OCI-LY7 (cell line): ENCODE measurements at regions of chr6 and their contacts with region 1.

Region 1: GRCh38 chr6:42043787-42044475 is 6.4 kb upstream of the TAF8 start:
- DNase-seq: peak; percentile 90
- H3K4me3 ChIP-seq: peak overlapping the region; percentile 20
- H3K27ac ChIP-seq: peak overlapping the region; percentile 68
- H3K4me1 ChIP-seq: peaks cover 83% of the 10 kb centered on the region
- CTCF ChIP-seq: peak; percentile 97

Region 2: GRCh38 chr6:41735427-41736356 is 308.2 kb before region 1 on chr6 and contains the start of gene TFEB:
- CTCF ChIA-PET with region 1: no interaction called
- POLR2A ChIA-PET with region 1: interaction called, 3 read pairs
- intact Hi-C with region 1: loop called (anchors 2 kb)
- DNase-seq: peak; percentile 93
- H3K4me3 ChIP-seq: peak within 1 kb of the TSS; percentile 91
- H3K27ac ChIP-seq: peak within 1 kb of the TSS; percentile 94
- H3K4me1 ChIP-seq: peaks cover 41% of the 10 kb centered on the region
- CTCF ChIP-seq: peak; percentile 76
- total RNA-seq, gene TFEB: 25.3 and 36.8 TPM in 2 replicates

Region 3: DNA sequence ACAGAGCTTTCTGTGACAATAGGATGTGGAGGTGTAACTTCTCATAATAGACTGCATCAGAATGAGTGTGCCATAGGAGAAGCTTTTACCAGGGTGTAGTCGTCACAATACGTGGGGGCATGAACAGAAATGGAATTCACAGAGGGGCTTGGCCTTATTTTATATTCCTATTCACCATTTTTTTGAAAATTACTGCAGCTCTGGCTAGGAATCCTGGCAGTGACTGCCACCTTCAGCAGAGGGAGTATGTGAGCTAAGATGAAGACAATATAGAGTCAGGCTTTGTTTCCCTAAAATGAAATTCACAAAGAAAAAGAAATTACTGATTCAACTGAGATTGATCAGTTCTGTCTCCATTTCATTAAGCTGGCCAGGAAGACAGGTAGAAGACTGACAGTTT is 242.6 kb before region 1 on chr6:
- CTCF ChIA-PET with region 1: interaction called, 3 read pairs
- POLR2A ChIA-PET with region 1: interaction called, 3 read pairs
- intact Hi-C with region 1: loop called (anchors 1 kb)
- DNase-seq: peak; percentile 35
- H3K4me3 ChIP-seq: no peak overlapping the region
- H3K27ac ChIP-seq: no peak overlapping the region
- H3K4me1 ChIP-seq: no peaks in the 10 kb centered on the region
- CTCF ChIP-seq: peak; percentile 80

Region 4: GRCh38 chr6:41920921-41921711 is 122.8 kb before region 1 on chr6 and contains the starts of genes BYSL and MED20:
- CTCF ChIA-PET with region 1: interaction called, 10 read pairs
- POLR2A ChIA-PET with region 1: interaction called, 15 read pairs
- intact Hi-C with region 1: loop called (anchors 1 kb)
- DNase-seq: peak; percentile 96
- H3K4me3 ChIP-seq: peak within 1 kb of the TSS; percentile 92
- H3K27ac ChIP-seq: peak within 1 kb of the TSS; percentile 74
- H3K4me1 ChIP-seq: peaks cover 25% of the 10 kb centered on the region
- CTCF ChIP-seq: peak; percentile 97
- total RNA-seq, gene BYSL: 36.1 and 41.9 TPM in 2 replicates
- total RNA-seq, gene MED20: 27.7 and 30.7 TPM in 2 replicates

Region 5: DNA sequence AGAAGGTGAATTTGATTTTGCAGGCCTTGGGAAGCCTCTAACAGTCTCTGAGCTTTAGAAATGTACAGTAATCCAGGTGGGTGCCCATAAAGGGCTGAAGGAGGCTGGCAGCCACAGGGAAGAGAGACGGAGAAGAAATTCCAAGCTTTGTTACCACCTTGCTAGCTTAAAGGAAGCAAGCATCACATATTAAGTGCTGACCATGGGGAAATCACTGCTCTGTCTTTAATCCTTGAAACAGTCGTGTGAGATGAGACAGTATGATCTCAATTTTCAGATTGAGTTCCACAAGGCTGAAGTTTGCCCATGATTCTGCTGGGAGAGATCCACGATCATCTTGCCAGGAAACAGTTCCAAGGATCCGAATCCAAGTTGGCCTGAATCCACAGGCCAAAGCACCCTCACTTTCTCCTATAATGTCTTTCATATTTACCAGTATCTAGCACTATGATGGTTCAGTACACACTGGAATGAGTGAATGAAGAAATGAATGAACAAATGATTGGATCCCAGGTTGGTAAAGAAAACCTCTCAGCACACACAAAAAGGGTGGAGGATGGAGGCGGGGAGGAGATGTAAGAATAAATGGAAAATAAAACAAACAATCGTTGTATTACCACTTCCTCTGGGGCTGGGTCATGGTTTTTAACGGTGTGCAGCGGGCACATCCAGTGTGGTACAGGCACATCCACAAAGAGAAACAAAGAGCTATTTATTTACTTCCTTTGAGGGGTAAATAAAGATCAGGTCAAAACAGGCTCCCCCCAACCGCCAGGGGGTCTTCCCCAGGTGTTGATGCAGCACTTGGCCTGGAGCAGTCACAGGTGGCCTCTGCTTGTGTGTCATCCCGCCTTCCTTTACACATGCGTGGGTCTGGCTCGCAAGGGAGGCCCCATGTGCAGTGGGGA is 21.8 kb before region 1 on chr6:
- CTCF ChIA-PET with region 1: interaction called, 7 read pairs
- POLR2A ChIA-PET with region 1: interaction called, 29 read pairs
- intact Hi-C with region 1: loop called (anchors 1 kb)
- DNase-seq: peak; percentile 98
- H3K4me3 ChIP-seq: peak overlapping the region; percentile 35
- H3K27ac ChIP-seq: peak overlapping the region; percentile 98
- H3K4me1 ChIP-seq: peaks cover 96% of the 10 kb centered on the region
- CTCF ChIP-seq: peak; percentile 45